ENCODE measurements at regions of chr16 and their contacts with region 1.

Region 1: GRCh38 chr16:17467923-17468540 is 2.7 kb downstream of the XYLT1 start:
- DNase-seq: no peak
- ATAC-seq: peak; percentile 63
- H3K4me3 ChIP-seq: no peak overlapping the region
- H3K27ac ChIP-seq: no peak overlapping the region
- H3K4me1 ChIP-seq: peaks cover 4 to 13% of the 10 kb centered on the region in 2 experiments; a peak in 2 of 4 replicates
- H3K27me3 ChIP-seq: peaks cover 7% of the 10 kb centered on the region; the same call in 1 of the 2 replicates
- CTCF ChIP-seq: peak; percentile 55 to 69 (median 55); a peak in 5 of 6 replicates
- POLR2A ChIP-seq: no peak
- RAD21 ChIP-seq: peak; percentile 81

Region 2: GRCh38 chr16:16861546-16861945 is 606.5 kb before region 1 on chr16:
- CTCF ChIA-PET with region 1: no interaction called
- POLR2A ChIA-PET with region 1: no interaction called
- RAD21 ChIA-PET with region 1: no interaction called
- intact Hi-C with region 1: loop called (anchors 10 kb)
- DNase-seq: peak; percentile 18
- ATAC-seq: peak; percentile 70; the same call in 1 of the 2 replicates
- H3K4me3 ChIP-seq: no peak overlapping the region
- H3K27ac ChIP-seq: no peak overlapping the region
- H3K4me1 ChIP-seq: no peaks in the 10 kb centered on the region
- H3K27me3 ChIP-seq: peaks cover 5% of the 10 kb centered on the region
- CTCF ChIP-seq: peak; percentile 28 to 64 (median 63); a peak in 4 of 6 replicates
- POLR2A ChIP-seq: no peak
- RAD21 ChIP-seq: peak; percentile 57

Region 3: DNA sequence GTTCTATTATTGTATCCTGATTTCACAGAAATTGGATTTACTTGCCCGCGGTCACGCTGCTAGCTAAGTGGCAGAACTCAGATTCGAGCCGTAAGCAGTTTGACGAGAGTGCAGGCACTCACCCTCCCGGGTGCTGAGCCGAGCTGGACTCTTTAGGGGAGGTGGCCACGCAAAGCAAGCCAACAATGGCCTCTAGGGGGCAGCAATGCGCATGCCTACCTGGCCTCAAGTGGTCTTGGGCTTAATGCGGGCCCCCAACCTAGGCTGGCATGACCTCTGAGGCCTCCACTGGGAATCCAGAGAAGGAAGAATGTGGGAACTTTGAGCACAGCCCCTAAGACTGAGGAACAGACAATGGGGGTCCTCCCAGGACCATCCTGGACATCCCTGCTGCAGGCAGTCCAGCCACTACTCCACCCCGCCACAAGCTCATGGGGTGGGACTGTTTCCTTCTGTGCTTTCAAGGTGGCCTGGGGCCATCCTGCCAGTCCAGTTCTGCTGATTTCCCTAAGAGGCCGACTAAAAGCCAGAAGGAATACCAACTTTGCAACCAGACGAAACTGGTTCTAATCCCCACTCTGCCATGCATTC is 273.7 kb before region 1 on chr16:
- CTCF ChIA-PET with region 1: interaction called, 11 read pairs
- POLR2A ChIA-PET with region 1: no interaction called
- RAD21 ChIA-PET with region 1: no interaction called
- intact Hi-C with region 1: no loop called
- DNase-seq: peak; percentile 24
- ATAC-seq: peak; percentile 88
- H3K4me3 ChIP-seq: no peak overlapping the region
- H3K27ac ChIP-seq: no peak overlapping the region
- H3K4me1 ChIP-seq: no peaks in the 10 kb centered on the region
- H3K27me3 ChIP-seq: no peaks in the 10 kb centered on the region
- CTCF ChIP-seq: peak; percentile 15 to 89 (median 89); a peak in 5 of 6 replicates
- POLR2A ChIP-seq: no peak
- RAD21 ChIP-seq: peak; percentile 53

Region 4: DNA sequence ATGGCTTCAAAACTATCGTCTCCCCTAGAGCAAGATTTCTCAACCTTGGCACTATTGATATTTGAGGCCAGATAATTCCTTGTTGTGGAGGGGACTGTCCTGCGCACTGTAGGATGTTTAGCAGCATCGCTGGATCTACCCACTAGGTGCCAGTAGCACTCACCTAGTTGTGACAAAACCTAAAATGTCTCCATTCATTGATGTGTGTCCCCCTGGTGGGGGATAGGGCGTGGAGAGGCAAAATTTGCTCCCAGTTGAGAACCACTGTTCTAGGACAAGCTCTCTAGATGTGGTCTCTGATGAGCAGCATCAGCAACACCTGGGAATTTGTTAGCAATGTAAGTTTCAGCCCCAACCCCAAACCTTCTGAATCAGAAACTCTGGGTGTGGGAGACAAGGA is 256.2 kb before region 1 on chr16:
- CTCF ChIA-PET with region 1: interaction called, 4 read pairs
- POLR2A ChIA-PET with region 1: no interaction called
- RAD21 ChIA-PET with region 1: no interaction called
- intact Hi-C with region 1: loop called (anchors 5 kb)
- DNase-seq: peak; percentile 15
- ATAC-seq: peak; percentile 87
- H3K4me3 ChIP-seq: no peak overlapping the region
- H3K27ac ChIP-seq: no peak overlapping the region
- H3K4me1 ChIP-seq: no peaks in the 10 kb centered on the region
- H3K27me3 ChIP-seq: no peaks in the 10 kb centered on the region
- CTCF ChIP-seq: peak; percentile 58 to 86 (median 61)
- POLR2A ChIP-seq: no peak
- RAD21 ChIP-seq: peak; percentile 64

Region 5: DNA sequence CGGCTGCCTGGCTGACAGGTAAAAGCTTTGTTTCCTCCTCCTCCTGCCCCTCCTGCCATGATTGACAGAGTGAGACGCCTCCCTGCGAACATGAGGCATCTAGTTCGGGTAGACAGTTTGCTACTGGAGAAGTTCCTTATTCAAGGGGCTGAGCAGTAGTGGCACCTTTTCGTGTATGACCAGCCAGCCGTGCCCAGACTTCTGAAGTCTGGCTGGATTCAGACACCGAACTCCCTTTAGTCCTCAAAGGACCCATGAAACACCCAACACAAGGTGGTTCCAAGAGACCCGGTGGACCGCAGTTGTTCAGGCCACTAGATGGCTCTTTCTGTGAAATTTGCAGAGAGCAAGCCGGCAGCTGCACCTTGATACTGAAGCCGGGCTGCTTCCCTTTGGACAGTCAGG is 190.1 kb before region 1 on chr16:
- CTCF ChIA-PET with region 1: interaction called, 12 read pairs
- POLR2A ChIA-PET with region 1: no interaction called
- RAD21 ChIA-PET with region 1: interaction called, 4 read pairs
- intact Hi-C with region 1: loop called (anchors 5 kb)
- DNase-seq: peak; percentile 24
- ATAC-seq: peak; percentile 60
- H3K4me3 ChIP-seq: no peak overlapping the region
- H3K27ac ChIP-seq: no peak overlapping the region
- H3K4me1 ChIP-seq: peaks cover 22 to 33% of the 10 kb centered on the region in 2 experiments
- H3K27me3 ChIP-seq: peaks cover 7% of the 10 kb centered on the region; the same call in 1 of the 2 replicates
- CTCF ChIP-seq: peak; percentile 41 to 55 (median 51); a peak in 5 of 6 replicates
- POLR2A ChIP-seq: no peak
- RAD21 ChIP-seq: peak; percentile 61